ENCODE measurements at regions of chr17 and their contacts with region 1.

Region 1: DNA sequence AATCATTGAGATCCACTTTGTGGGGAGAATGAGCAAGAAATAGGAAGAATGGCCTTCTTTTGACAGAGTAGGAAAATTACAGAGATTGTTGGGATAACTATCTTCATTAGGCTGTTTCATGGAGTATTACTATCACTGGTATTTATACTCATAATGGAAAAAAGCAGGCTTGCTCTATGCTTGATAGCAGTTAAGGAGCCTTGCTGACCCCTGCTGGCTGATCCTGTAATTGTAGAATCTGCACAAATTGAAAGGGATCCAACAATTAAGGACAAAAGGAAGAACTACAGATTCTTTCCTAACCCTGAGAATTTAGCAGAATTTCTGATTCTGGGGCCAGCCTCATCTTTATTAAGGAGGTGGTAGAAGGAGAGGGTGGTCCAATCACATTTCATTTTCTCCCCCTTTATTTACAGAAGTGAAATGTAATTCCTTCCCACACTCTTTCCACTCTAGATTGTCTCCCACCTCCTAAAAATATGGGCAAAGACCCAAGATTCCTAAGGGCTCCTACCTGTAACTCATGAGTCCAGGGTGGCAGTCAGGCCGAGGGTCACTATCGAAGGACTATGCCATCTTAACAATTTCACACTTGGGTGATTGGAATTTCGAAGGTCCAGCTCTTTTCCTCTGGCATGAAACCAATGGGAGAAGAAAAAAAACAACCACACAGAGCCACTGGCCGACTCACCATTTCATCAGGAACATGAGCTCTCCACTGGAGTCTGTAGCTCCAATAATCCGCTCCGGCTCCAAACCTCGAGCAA is 26.3 kb downstream of the NFE2L1 start:
- DNase-seq: peak; percentile 77
- H3K4me3 Mint-ChIP-seq: no peak overlapping the region
- H3K27ac Mint-ChIP-seq: no peak overlapping the region
- H3K4me1 Mint-ChIP-seq: no peaks in the 10 kb centered on the region
- H3K27me3 Mint-ChIP-seq: no peaks in the 10 kb centered on the region

Region 2: GRCh38 chr17:47934856-47935255 is 139.6 kb before region 1 on chr17:
- CTCF ChIA-PET with region 1: no interaction called
- POLR2A ChIA-PET with region 1: no interaction called
- DNase-seq: no peak
- H3K4me3 Mint-ChIP-seq: no peak overlapping the region
- H3K27ac Mint-ChIP-seq: no peak overlapping the region
- H3K4me1 Mint-ChIP-seq: peaks cover 8% of the 10 kb centered on the region
- H3K27me3 Mint-ChIP-seq: no peaks in the 10 kb centered on the region

Region 3: DNA sequence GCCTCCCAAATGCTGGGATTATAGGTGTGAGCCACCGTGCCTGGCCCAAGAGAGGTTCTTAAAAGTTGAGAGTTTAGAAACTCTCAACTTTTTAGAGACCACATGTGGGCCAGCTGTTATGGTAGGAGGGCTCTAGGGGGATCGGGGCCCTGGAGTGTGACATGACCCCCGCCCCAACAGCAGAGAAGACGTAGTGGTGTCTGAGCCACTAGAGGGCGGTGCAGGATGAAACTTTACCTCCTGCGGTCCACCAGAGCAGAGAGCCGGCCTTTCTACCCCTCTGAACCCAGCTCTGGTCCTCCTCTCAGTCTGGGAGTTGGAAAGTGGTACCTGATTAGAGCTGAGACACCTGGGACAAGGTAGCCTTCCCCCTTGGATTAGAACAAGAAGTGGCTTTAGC is 96.2 kb before region 1 on chr17:
- CTCF ChIA-PET with region 1: interaction called, 15 read pairs
- POLR2A ChIA-PET with region 1: no interaction called
- DNase-seq: peak; percentile 61
- H3K4me3 Mint-ChIP-seq: no peak overlapping the region
- H3K27ac Mint-ChIP-seq: no peak overlapping the region
- H3K4me1 Mint-ChIP-seq: peaks cover 18% of the 10 kb centered on the region
- H3K27me3 Mint-ChIP-seq: no peaks in the 10 kb centered on the region

Region 4: GRCh38 chr17:48030531-48030930 is 44.0 kb before region 1 on chr17:
- CTCF ChIA-PET with region 1: interaction called, 94 read pairs
- POLR2A ChIA-PET with region 1: interaction called, 5 read pairs
- DNase-seq: no peak
- H3K4me3 Mint-ChIP-seq: no peak overlapping the region
- H3K27ac Mint-ChIP-seq: no peak overlapping the region
- H3K4me1 Mint-ChIP-seq: peaks cover 13% of the 10 kb centered on the region
- H3K27me3 Mint-ChIP-seq: peaks cover 34% of the 10 kb centered on the region

Region 5: GRCh38 chr17:48037036-48037837 is 37.3 kb before region 1 on chr17 and contains the start of gene COPZ2:
- CTCF ChIA-PET with region 1: interaction called, 11 read pairs
- POLR2A ChIA-PET with region 1: interaction called, 3 read pairs
- DNase-seq: peak; percentile 75
- H3K4me3 Mint-ChIP-seq: peak within 1 kb of the TSS; percentile 79
- H3K27ac Mint-ChIP-seq: peak within 1 kb of the TSS; percentile 30
- H3K4me1 Mint-ChIP-seq: peaks cover 12% of the 10 kb centered on the region
- H3K27me3 Mint-ChIP-seq: peaks cover 40% of the 10 kb centered on the region
- total RNA-seq, gene COPZ2: 7.4 to 11.5 TPM

Region 6: DNA sequence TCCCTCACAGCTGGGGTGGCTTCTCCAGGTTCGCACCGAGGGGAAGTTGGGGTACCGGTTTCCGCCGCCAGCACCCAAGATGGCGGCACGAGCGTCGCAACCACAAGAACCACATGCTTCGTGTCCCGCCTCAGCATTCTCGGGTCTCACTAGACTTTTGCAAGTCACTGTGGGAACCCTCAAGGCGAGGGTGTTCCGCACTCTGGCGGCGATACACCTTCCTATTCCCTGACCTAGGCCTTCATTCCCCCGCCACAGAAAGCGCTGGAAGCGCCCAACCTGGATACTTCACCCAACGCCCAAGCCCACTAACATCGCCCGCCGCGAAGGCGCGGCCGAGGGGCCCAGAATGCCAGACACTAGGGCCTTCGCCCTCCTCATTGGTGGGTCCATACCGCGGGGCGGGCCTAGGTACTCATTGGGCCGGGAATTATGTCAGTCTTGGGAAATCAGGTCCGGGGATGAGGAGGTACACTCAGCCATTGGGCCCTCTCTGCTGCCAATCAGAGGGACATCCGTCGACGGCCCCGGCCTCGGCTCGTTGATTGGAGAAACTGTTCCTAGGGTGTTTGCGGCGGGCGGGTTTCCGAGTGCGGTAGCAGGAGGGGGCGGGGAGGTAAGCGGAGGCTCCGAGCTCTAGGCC is 26.6 kb before region 1 on chr17 and contains the start of gene NFE2L1:
- CTCF ChIA-PET with region 1: interaction called, 17 read pairs
- POLR2A ChIA-PET with region 1: interaction called, 9 read pairs
- DNase-seq: peak; percentile 99
- H3K4me3 Mint-ChIP-seq: peak within 1 kb of the TSS; percentile 99
- H3K27ac Mint-ChIP-seq: peak within 1 kb of the TSS; percentile 97
- H3K4me1 Mint-ChIP-seq: peaks cover 64% of the 10 kb centered on the region
- H3K27me3 Mint-ChIP-seq: no peaks in the 10 kb centered on the region
- total RNA-seq, gene NFE2L1: 69.4 to 70.2 TPM

Region 7: GRCh38 chr17:48054238-48055185 is 20.0 kb before region 1 on chr17:
- CTCF ChIA-PET with region 1: interaction called, 17 read pairs
- POLR2A ChIA-PET with region 1: interaction called, 3 read pairs
- DNase-seq: no peak
- H3K4me3 Mint-ChIP-seq: no peak overlapping the region
- H3K27ac Mint-ChIP-seq: peak overlapping the region; percentile 80
- H3K4me1 Mint-ChIP-seq: peaks cover 61% of the 10 kb centered on the region
- H3K27me3 Mint-ChIP-seq: no peaks in the 10 kb centered on the region

Region 8: DNA sequence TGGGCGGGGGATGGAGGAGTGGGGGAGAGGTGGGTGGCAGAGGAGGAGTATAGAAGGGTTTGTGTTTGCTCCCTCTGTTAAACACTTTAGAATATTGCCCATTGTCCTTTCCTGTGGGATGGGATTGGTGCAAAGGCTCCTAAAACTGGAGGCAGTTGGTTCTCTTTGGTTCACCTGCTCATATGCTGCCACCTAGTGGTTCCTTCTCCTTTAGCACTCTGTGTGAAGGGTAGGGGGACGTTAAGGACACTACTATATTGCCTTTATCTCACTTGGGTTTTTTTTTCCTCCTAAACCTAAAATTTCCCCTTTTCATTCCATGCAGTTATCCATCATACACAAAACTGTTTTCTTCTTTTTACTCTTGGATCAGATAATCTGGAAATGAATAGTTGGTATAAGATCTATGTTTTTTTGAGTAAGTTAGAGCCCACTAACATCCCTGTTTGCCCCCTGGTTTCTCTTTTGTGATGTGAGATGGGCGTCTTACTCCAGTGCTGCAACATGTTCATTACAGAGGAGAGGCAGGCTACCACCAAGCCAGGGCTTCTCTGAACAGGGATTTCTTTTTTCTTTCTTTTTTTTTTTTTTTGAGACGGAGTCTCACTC is 56.8 kb after region 1 on chr17:
- CTCF ChIA-PET with region 1: interaction called, 74 read pairs
- POLR2A ChIA-PET with region 1: no interaction called
- DNase-seq: peak; percentile 41
- H3K4me3 Mint-ChIP-seq: no peak overlapping the region
- H3K27ac Mint-ChIP-seq: no peak overlapping the region
- H3K4me1 Mint-ChIP-seq: no peaks in the 10 kb centered on the region
- H3K27me3 Mint-ChIP-seq: no peaks in the 10 kb centered on the region

Measured in activated CD4-positive, alpha-beta memory T cell treated with anti-CD3 and anti-CD28 coated beads, Interleukin-2, amount 10 ng/mL, durations not matched to agents 7 days and 5 days (primary cell).